CD8-positive, alpha-beta T cell (primary cell): ENCODE measurements at regions of chr2 and their contacts with region 1.

Region 1: GRCh38 chr2:129849559-129850160 is 129.8 kb upstream of the RAB6C start:
- DNase-seq: peak in 2 of 9 experiments; percentile 75 to 82
- ATAC-seq: peak; percentile 91
- H3K4me3 ChIP-seq: no peak overlapping the region
- H3K4me3 Mint-ChIP-seq: no peak overlapping the region
- H3K27ac ChIP-seq: no peak overlapping the region
- H3K27ac Mint-ChIP-seq: no peak overlapping the region
- H3K4me1 ChIP-seq: no peaks in the 10 kb centered on the region
- H3K4me1 Mint-ChIP-seq: peaks cover 3% of the 10 kb centered on the region
- H3K27me3 ChIP-seq: no peaks in the 10 kb centered on the region
- H3K27me3 Mint-ChIP-seq: peaks cover 17% of the 10 kb centered on the region
- CTCF ChIP-seq: peak; percentile 86

Region 2: DNA sequence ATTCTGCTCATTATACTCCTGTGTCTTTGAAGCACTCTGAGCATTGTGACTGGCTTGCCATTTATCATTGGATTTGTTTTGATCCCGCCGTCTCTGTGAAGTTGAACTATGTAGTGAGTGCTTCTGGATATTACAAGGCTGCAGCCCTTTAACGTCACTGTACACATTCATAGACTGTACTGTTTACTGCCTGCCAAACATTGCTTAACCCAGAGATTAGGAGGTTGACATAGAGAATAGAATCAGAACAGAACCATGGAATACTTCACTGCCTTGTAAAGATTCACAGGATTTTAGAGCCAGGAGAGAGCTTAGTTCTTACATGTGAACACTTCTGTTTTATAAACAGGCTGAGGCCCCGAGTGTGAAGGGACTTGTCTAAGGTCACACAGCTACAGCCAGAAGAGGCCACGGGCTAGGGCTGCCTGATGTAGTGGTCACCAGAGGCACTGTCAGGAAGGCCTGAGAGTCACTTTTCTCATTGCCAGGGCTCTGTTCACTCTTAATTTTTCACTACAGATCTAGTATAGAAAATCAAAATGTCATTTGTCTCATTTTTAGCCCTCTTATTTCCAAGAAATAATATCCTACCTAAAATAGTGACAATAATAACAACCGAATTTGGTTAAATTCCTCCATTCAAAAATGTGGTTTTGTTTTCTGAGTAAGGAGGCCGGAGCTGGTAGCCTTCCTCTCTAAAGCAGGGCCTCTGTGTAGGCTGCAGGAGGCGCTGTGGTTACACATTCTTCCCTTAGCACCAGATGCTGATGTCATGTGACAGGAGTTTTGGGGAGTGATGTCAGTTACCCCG is 1670.8 kb before region 1 on chr2:
- CTCF ChIA-PET with region 1: no interaction called
- POLR2A ChIA-PET with region 1: no interaction called
- intact Hi-C with region 1: loop called in 1 of 2 experiments (anchors 10 kb)
- DNase-seq: peak in 6 of 9 experiments; percentile 7 to 69 (median 46)
- ATAC-seq: peak; percentile 48
- H3K4me3 ChIP-seq: no peak overlapping the region
- H3K4me3 Mint-ChIP-seq: no peak overlapping the region
- H3K27ac ChIP-seq: no peak overlapping the region
- H3K27ac Mint-ChIP-seq: no peak overlapping the region
- H3K4me1 ChIP-seq: no peaks in the 10 kb centered on the region
- H3K4me1 Mint-ChIP-seq: no peaks in the 10 kb centered on the region
- H3K27me3 ChIP-seq: no peaks in the 10 kb centered on the region
- H3K27me3 Mint-ChIP-seq: no peaks in the 10 kb centered on the region
- CTCF ChIP-seq: peak; percentile 27

Region 3: DNA sequence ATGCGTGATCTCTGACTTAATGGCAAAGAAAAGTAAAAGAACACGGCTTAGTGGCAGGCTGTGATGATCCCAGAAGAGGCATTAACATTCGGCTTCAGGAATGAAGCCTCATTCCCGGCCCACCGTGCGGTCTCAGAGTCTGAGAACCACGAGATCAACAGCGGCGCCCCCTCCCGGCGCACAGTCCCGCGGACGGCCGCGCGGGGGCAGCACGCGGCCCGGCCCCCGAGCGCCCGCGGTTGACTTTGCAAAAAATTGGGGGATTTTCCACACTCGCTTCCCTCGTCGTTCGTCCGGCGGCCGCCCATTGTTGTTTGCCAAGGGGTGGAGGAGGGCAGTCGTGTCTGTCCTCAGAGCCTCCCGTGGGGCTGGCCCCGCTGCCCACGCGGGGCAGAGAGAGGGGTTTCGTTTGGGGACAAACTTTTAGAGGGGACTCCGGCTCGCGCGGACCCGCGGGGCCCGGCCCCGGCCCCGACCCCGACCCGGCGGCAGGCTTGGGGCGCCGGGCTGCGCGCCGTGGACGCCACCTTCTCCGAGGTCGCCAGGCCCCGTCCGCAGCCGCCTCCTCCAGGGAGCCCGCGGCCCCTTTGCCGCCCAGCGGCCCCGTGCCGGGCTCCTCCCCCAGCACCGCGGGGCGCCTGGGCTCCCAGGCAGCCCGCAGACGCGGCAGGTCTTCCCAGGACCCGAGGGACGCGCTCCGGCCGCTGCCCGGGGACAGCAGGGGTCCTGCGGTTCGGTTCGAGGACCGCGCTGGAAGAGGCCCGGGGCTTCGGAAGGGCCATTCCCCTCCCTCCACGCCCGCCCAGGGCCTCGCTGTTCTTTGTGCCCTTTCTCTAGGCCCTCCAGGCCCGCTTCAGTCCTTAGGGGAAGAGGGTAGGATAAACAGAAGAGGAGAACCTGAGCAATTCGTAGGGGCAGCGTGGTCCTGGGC is 1527.6 kb before region 1 on chr2:
- CTCF ChIA-PET with region 1: no interaction called
- POLR2A ChIA-PET with region 1: no interaction called
- intact Hi-C with region 1: loop called (anchors 2 to 5 kb)
- DNase-seq: peak; percentile 66 to 89 (median 80)
- ATAC-seq: peak; percentile 68
- H3K4me3 ChIP-seq: peak overlapping the region; percentile 48 to 76
- H3K4me3 Mint-ChIP-seq: peak overlapping the region; percentile 74
- H3K27ac ChIP-seq: peak overlapping the region in 1 of 2 experiments; percentile 35
- H3K27ac Mint-ChIP-seq: no peak overlapping the region
- H3K4me1 ChIP-seq: peaks cover 15% of the 10 kb centered on the region
- H3K4me1 Mint-ChIP-seq: peaks cover 14% of the 10 kb centered on the region
- H3K27me3 ChIP-seq: peaks cover 0 to 3% of the 10 kb centered on the region in 2 experiments
- H3K27me3 Mint-ChIP-seq: no peaks in the 10 kb centered on the region
- CTCF ChIP-seq: peak; percentile 94

Region 4: DNA sequence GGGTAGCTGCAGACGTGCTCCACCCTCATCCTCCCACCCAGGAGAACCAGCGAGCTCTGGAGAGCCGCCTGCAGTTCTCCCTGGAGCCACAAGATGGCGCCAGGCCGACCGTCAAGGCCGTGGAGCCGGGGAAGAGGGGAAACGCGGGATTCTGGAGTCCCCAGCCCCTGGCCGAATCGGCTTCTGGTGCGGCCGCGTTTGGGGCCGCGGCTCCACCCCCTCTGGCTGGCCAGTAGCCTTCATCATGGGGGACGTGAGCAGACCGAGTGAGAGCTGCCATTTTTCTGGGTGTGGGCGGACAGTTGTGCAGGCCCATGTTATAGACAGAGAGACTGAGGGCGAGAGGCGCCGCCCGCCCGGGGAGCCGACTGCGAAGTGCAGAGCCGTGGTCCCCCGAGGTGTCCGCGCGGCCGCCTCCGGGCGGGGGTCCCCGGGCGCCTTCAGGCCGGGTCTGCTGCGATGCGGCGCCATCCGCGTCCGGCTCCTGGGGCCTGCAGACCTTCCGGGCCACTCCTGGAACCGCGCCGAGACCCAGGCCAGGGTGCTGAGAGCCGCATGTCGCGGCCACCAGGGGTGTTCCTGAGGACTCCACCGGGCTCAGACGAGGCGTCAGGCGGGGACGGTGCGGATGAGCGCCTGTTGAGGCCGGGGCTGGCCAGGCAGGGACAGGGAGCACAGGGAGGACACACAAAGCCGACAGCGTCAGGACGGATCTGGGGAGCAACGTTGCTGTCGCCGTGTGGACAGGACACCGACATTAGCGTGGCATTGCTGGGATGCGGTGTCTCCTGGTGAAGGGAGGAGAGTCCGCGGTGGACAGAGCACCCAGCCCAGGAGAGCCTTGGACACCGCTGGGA is 1112.7 kb before region 1 on chr2:
- CTCF ChIA-PET with region 1: no interaction called
- POLR2A ChIA-PET with region 1: no interaction called
- intact Hi-C with region 1: loop called in 1 of 2 experiments (anchors 1 kb)
- DNase-seq: peak; percentile 16 to 63 (median 51)
- ATAC-seq: peak; percentile 31
- H3K4me3 ChIP-seq: no peak overlapping the region
- H3K4me3 Mint-ChIP-seq: peak overlapping the region; percentile 26
- H3K27ac ChIP-seq: no peak overlapping the region
- H3K27ac Mint-ChIP-seq: no peak overlapping the region
- H3K4me1 ChIP-seq: peaks cover 6% of the 10 kb centered on the region
- H3K4me1 Mint-ChIP-seq: peaks cover 7% of the 10 kb centered on the region
- H3K27me3 ChIP-seq: peaks cover 0 to 2% of the 10 kb centered on the region in 2 experiments
- H3K27me3 Mint-ChIP-seq: peaks cover 15% of the 10 kb centered on the region
- CTCF ChIP-seq: peak; percentile 73

Region 5: GRCh38 chr2:129318581-129319421 is 530.9 kb before region 1 on chr2:
- CTCF ChIA-PET with region 1: no interaction called
- POLR2A ChIA-PET with region 1: no interaction called
- intact Hi-C with region 1: loop called in 1 of 2 experiments (anchors 5 kb)
- DNase-seq: no peak
- ATAC-seq: no peak
- H3K4me3 ChIP-seq: no peak overlapping the region
- H3K4me3 Mint-ChIP-seq: no peak overlapping the region
- H3K27ac ChIP-seq: no peak overlapping the region
- H3K27ac Mint-ChIP-seq: no peak overlapping the region
- H3K4me1 ChIP-seq: no peaks in the 10 kb centered on the region
- H3K4me1 Mint-ChIP-seq: no peaks in the 10 kb centered on the region
- H3K27me3 ChIP-seq: no peaks in the 10 kb centered on the region
- H3K27me3 Mint-ChIP-seq: no peaks in the 10 kb centered on the region
- CTCF ChIP-seq: no peak

Region 6: GRCh38 chr2:129891372-129892320 is 42.0 kb after region 1 on chr2:
- CTCF ChIA-PET with region 1: no interaction called
- POLR2A ChIA-PET with region 1: no interaction called
- intact Hi-C with region 1: no loop called
- DNase-seq: no peak
- ATAC-seq: no peak
- H3K4me3 ChIP-seq: no peak overlapping the region
- H3K4me3 Mint-ChIP-seq: no peak overlapping the region
- H3K27ac ChIP-seq: no peak overlapping the region
- H3K27ac Mint-ChIP-seq: no peak overlapping the region
- H3K4me1 ChIP-seq: no peaks in the 10 kb centered on the region
- H3K4me1 Mint-ChIP-seq: no peaks in the 10 kb centered on the region
- H3K27me3 ChIP-seq: peaks cover 0 to 3% of the 10 kb centered on the region in 2 experiments
- H3K27me3 Mint-ChIP-seq: peaks cover 9% of the 10 kb centered on the region
- CTCF ChIP-seq: no peak

Region 7: DNA sequence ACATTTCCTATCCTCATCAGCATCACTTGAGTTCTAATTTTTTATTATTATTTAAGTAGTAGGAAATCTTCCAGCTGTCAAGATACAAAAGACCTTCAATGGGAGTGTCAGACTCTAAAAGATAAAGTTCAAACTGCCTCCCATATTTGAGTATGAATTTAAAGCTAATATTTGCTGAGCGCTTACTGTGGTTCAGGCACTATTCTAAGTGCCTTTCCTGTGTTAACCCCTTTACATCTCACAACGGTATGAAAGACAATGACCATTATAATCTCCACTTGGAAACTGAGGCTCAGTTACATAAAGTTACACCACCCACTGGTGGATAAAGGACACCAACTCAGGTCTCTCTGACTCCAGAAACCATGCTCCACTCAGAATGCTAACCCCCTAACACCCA is 169.7 kb after region 1 on chr2:
- CTCF ChIA-PET with region 1: no interaction called
- POLR2A ChIA-PET with region 1: no interaction called
- intact Hi-C with region 1: no loop called
- DNase-seq: no peak
- ATAC-seq: no peak
- H3K4me3 ChIP-seq: no peak overlapping the region
- H3K4me3 Mint-ChIP-seq: no peak overlapping the region
- H3K27ac ChIP-seq: no peak overlapping the region
- H3K27ac Mint-ChIP-seq: no peak overlapping the region
- H3K4me1 ChIP-seq: no peaks in the 10 kb centered on the region
- H3K4me1 Mint-ChIP-seq: no peaks in the 10 kb centered on the region
- H3K27me3 ChIP-seq: no peaks in the 10 kb centered on the region
- H3K27me3 Mint-ChIP-seq: peaks cover 11% of the 10 kb centered on the region
- CTCF ChIP-seq: no peak